A673 (cell line): ENCODE measurements at regions of chr14 and their contacts with region 1.

Region 1: DNA sequence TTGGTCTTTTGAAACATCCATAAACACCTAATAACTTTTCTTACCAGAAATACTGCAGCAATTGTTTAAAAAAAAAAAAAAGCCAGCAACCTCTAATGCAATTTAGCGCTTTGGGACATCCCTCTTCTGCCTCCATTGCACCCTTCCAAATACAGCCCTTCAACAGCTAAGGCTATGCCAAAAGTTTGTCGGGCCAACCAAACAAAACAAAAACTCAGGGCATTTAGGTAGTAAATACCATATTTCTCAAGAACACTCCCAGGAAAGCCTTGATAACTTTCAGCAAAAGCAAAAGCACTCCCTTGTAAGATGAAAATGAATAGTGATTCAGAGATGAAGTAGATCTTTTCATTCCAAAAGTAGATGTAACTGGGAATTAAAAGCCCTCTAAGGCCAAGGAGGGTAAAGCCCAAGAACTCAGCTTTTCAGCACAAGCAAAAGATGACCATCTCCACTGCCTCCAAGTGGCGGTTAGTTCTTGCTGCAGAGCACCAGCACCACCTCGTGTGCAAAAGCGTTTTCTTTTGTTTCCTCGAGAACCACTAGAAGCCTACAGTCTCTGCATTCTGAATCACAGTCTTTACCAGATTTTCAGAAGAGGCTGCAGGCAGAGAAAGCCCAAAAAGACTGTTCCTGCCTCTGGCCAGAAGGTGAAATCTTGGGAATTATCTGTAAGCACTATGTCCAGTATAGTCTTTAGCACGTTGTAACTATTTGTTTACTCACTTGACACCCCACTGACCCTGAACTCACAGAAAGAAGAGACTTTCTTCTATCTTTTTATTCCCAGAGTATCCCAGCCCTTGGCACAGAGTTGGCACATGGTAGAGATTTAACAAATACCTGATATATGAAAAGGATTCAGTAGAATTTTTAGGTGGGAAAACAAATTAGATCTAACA is 53.1 kb downstream of the SIX6 start:
- DNase-seq: peak; percentile 79
- H3K4me3 ChIP-seq: no peak overlapping the region
- H3K27ac ChIP-seq: no peak overlapping the region
- H3K4me1 ChIP-seq: no peaks in the 10 kb centered on the region
- H3K27me3 ChIP-seq: no peaks in the 10 kb centered on the region
- CTCF ChIP-seq: peak; percentile 79

Region 2: GRCh38 chr14:59964251-59965007 is 597.7 kb before region 1 on chr14:
- CTCF ChIA-PET with region 1: no interaction called
- POLR2A ChIA-PET with region 1: no interaction called
- intact Hi-C with region 1: loop called (anchors 5 kb)
- DNase-seq: no peak
- H3K4me3 ChIP-seq: no peak overlapping the region
- H3K27ac ChIP-seq: no peak overlapping the region
- H3K4me1 ChIP-seq: peaks cover 3% of the 10 kb centered on the region
- H3K27me3 ChIP-seq: no peaks in the 10 kb centered on the region
- CTCF ChIP-seq: no peak

Region 3: GRCh38 chr14:60184146-60184904 is 377.8 kb before region 1 on chr14:
- CTCF ChIA-PET with region 1: interaction called, 6 read pairs
- POLR2A ChIA-PET with region 1: no interaction called
- intact Hi-C with region 1: loop called (anchors 2 kb)
- DNase-seq: peak; percentile 81
- H3K4me3 ChIP-seq: peak overlapping the region; percentile 34
- H3K27ac ChIP-seq: no peak overlapping the region
- H3K4me1 ChIP-seq: peaks cover 11% of the 10 kb centered on the region
- H3K27me3 ChIP-seq: no peaks in the 10 kb centered on the region
- CTCF ChIP-seq: peak; percentile 84

Region 4: DNA sequence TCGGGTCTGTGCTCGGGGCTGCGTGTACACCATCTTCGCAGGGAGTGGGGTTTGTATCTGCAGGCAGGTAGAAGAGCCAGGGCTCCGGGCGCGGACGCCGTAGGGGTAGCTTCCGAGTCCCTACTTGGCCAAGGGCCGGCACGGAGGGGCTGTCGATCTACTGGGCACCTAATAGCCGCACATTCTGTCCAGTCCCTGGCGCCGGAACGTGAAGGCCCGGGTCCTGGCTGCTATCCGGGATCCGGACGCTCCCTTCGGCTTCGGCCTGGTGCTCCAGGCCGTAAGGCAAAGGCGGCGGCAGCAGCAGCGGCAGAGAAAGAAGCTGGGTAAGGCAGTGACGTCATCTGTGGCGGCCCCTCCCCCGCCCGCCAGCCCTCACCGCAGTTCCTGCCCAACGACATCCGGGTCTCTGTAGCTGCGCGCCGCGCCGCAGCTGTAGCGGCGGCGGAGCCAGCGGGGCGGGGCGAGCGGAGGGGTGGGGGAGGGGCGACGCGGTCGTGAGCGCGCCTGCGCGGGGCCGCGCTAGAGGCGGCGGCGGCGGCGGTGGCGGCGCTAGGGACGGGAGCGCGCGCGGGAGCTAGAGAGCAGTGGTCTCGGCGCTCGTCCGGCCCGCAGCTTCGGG is 313.3 kb before region 1 on chr14 and contains the start of gene PPM1A:
- CTCF ChIA-PET with region 1: no interaction called
- POLR2A ChIA-PET with region 1: interaction called, 11 read pairs
- intact Hi-C with region 1: no loop called
- DNase-seq: peak; percentile 96
- H3K4me3 ChIP-seq: peak within 1 kb of the TSS; percentile 81
- H3K27ac ChIP-seq: peak within 1 kb of the TSS; percentile 98
- H3K4me1 ChIP-seq: peaks cover 19% of the 10 kb centered on the region
- H3K27me3 ChIP-seq: no peaks in the 10 kb centered on the region
- CTCF ChIP-seq: no peak
- total RNA-seq, gene PPM1A: 52.3 and 54.5 TPM in 2 replicates

Region 5: DNA sequence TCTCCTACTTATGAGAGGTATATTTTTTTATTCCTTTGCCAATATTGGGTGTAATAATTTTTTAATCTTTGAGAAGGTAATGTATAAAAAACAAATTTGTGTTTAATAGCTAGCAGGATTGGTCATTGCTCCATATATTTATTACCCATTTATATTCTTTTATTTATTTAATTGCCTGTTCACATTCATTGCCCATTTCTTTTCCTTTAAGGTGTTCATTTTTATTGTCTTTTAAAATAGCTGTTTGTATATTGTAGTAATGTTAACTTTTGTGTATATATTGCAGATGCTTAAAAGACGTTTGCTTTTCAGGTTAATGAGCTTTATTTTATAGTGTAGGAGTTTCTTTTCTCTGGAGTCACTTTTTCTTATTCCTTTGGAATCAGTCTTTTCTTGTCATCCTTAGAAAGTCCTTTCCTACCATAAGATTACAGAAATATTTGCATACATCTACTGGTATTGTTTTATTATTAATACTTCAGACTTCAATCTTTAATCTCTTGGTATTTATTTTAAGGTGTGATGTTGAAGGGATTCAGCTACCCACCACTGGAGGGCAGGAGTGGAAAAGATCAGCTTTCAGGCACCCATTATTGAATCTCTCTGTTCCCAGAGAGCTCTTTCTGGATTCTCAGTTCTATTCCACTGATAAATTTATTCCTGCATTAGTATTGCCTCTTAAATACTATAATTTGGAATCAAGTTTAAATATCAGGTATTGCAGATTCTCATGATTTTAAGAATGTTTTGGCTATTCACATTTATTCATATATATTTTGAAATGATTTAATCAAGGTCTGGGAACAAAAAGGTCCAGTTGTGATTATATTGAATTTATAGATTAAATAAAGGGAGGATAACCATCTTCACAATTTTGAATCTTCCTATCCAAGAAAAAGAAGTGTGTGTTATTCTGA is 295.8 kb before region 1 on chr14:
- CTCF ChIA-PET with region 1: no interaction called
- POLR2A ChIA-PET with region 1: no interaction called
- intact Hi-C with region 1: loop called (anchors 5 kb)
- DNase-seq: peak; percentile 55
- H3K4me3 ChIP-seq: no peak overlapping the region
- H3K27ac ChIP-seq: no peak overlapping the region
- H3K4me1 ChIP-seq: no peaks in the 10 kb centered on the region
- H3K27me3 ChIP-seq: no peaks in the 10 kb centered on the region
- CTCF ChIP-seq: peak; percentile 75

Region 6: DNA sequence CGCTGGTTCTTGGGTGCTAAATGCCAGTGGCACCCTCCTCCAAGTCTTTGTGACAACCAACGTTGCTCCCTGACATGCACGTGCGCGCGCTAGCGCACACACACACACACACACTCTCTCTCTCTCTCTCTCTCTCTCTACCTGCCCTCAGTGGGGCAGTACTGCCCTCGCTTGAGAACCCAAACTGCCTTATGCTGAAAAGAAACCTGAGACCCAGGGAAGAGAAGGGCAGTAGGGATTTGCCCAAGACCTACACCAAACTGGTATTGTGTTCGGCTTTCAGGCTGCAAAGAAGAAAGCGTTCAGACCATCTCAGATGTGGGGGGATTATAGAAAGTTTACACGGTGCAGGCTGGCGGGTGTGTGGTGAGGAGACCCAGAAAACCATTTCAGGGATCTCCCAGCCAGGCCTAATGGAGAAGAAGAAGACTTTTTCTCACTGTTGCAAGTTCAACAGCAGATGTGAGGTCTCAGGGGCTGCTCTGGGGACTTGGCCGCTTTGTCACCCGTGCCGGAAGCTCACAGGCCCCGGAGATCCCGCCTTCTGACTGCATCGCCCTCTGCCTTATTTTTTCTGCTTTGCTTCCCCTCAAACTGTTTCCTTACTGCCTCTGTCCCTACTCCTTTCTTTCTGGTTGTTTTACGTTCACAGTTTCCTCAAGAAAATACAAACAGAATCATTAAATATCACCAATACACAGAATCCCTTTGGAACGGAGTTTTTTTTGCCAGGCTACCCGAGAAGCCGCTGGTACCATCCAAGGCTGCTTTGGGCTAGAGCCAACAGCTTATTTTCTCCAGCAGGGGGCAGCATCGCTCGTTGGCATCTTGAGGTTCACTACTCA is 230.7 kb before region 1 on chr14:
- CTCF ChIA-PET with region 1: no interaction called
- POLR2A ChIA-PET with region 1: no interaction called
- intact Hi-C with region 1: loop called (anchors 5 kb)
- DNase-seq: peak; percentile 82
- H3K4me3 ChIP-seq: no peak overlapping the region
- H3K27ac ChIP-seq: no peak overlapping the region
- H3K4me1 ChIP-seq: peaks cover 5% of the 10 kb centered on the region
- H3K27me3 ChIP-seq: no peaks in the 10 kb centered on the region
- CTCF ChIP-seq: peak; percentile 92

Region 7: GRCh38 chr14:60349663-60350365 is 212.3 kb before region 1 on chr14:
- CTCF ChIA-PET with region 1: interaction called, 7 read pairs
- POLR2A ChIA-PET with region 1: no interaction called
- intact Hi-C with region 1: loop called (anchors 2 kb)
- DNase-seq: peak; percentile 61
- H3K4me3 ChIP-seq: no peak overlapping the region
- H3K27ac ChIP-seq: no peak overlapping the region
- H3K4me1 ChIP-seq: no peaks in the 10 kb centered on the region
- H3K27me3 ChIP-seq: no peaks in the 10 kb centered on the region
- CTCF ChIP-seq: peak; percentile 78